Activated CD4-positive, alpha-beta T cell treated with anti-CD3 and anti-CD28 coated beads for 36 hours (primary cell): ENCODE measurements at regions of chr15 and their contacts with region 1.

Region 1: GRCh38 chr15:82985688-82986441 is at the start of gene RAMAC:
- DNase-seq: peak; percentile 96
- ATAC-seq: peak; percentile 94
- H3K4me3 Mint-ChIP-seq: peak within 1 kb of the TSS; percentile 98
- H3K27ac Mint-ChIP-seq: peak within 1 kb of the TSS; percentile 98
- H3K4me1 Mint-ChIP-seq: peaks cover 21% of the 10 kb centered on the region
- H3K27me3 Mint-ChIP-seq: no peaks in the 10 kb centered on the region
- total RNA-seq, gene RAMAC: 17.3 to 19.5 TPM

Region 2: GRCh38 chr15:82540055-82540983 is 445.5 kb before region 1 on chr15 and contains the start of gene RPS17:
- CTCF ChIA-PET with region 1: no interaction called
- POLR2A ChIA-PET with region 1: no interaction called
- intact Hi-C with region 1: loop called (anchors 1 to 5 kb)
- DNase-seq: peak; percentile 99
- ATAC-seq: peak; percentile 93
- H3K4me3 Mint-ChIP-seq: peak within 1 kb of the TSS; percentile 96
- H3K27ac Mint-ChIP-seq: peak within 1 kb of the TSS; percentile 96
- H3K4me1 Mint-ChIP-seq: peaks cover 23% of the 10 kb centered on the region
- H3K27me3 Mint-ChIP-seq: no peaks in the 10 kb centered on the region
- total RNA-seq, gene RPS17: 2,882 to 3,294 TPM

Region 3: GRCh38 chr15:82551666-82552247 is 434.1 kb before region 1 on chr15:
- CTCF ChIA-PET with region 1: no interaction called
- POLR2A ChIA-PET with region 1: no interaction called
- intact Hi-C with region 1: no loop called
- DNase-seq: no peak
- ATAC-seq: no peak
- H3K4me3 Mint-ChIP-seq: no peak overlapping the region
- H3K27ac Mint-ChIP-seq: no peak overlapping the region
- H3K4me1 Mint-ChIP-seq: no peaks in the 10 kb centered on the region
- H3K27me3 Mint-ChIP-seq: peaks cover 2% of the 10 kb centered on the region

Region 4: GRCh38 chr15:82709421-82710207 is 276.3 kb before region 1 on chr15 and contains the start of gene AP3B2:
- CTCF ChIA-PET with region 1: no interaction called
- POLR2A ChIA-PET with region 1: no interaction called
- intact Hi-C with region 1: loop called in 1 of 2 experiments (anchors 1 kb)
- DNase-seq: peak; percentile 85
- ATAC-seq: peak; percentile 97
- H3K4me3 Mint-ChIP-seq: peak within 1 kb of the TSS; percentile 52
- H3K27ac Mint-ChIP-seq: no peak within 1 kb of the TSS
- H3K4me1 Mint-ChIP-seq: no peaks in the 10 kb centered on the region
- H3K27me3 Mint-ChIP-seq: peaks cover 15% of the 10 kb centered on the region
- total RNA-seq, gene AP3B2: 0.39 to 0.59 TPM

Region 5: DNA sequence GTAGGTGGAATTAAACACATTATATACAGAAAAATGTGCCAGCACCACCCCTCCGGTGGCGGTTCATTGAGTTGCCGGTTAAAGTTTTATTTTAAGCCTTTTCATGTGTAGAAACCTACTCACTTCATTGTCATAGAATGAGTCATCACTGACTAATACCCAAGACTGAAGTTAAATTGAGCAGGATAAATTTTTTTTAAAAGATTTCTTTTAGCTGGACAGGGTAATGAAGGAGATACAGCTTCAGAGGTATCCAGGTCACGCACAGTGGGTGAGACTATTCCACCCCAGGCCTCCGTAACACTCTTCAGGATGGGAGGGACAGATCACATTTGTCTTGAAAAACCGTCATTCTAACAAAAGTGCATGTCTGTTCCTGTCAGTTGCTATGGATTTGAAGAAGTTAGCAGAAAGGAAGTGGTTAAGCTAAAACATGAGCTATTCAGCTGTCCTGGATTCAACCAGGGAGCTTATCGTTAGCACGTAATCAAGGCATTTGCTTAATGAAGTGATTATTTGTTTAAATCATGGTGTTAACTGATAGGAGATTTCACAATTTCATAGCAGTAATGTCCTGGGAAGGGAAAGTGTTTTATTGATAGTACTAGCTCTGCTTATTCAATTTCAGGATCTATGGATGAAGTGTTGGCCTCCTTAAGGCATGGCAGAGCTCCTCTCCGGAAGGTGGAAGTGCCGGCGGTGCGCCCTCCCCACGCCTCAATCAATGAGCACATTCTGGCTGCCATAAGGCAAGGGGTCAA is 153.1 kb before region 1 on chr15:
- CTCF ChIA-PET with region 1: interaction called, 3 read pairs
- POLR2A ChIA-PET with region 1: no interaction called
- intact Hi-C with region 1: loop called in 1 of 2 experiments (anchors 5 kb)
- DNase-seq: peak; percentile 72
- ATAC-seq: peak; percentile 92
- H3K4me3 Mint-ChIP-seq: no peak overlapping the region
- H3K27ac Mint-ChIP-seq: peak overlapping the region; percentile 7
- H3K4me1 Mint-ChIP-seq: peaks cover 34% of the 10 kb centered on the region
- H3K27me3 Mint-ChIP-seq: no peaks in the 10 kb centered on the region

Region 6: GRCh38 chr15:82952158-82953081 is 33.4 kb before region 1 on chr15 and contains the start of gene HOMER2:
- CTCF ChIA-PET with region 1: no interaction called
- POLR2A ChIA-PET with region 1: interaction called, 4 read pairs
- intact Hi-C with region 1: loop called in 1 of 2 experiments (anchors 1 kb)
- DNase-seq: peak; percentile 35
- ATAC-seq: peak; percentile 57
- H3K4me3 Mint-ChIP-seq: peak within 1 kb of the TSS; percentile 67
- H3K27ac Mint-ChIP-seq: peak within 1 kb of the TSS; percentile 65
- H3K4me1 Mint-ChIP-seq: peaks cover 2% of the 10 kb centered on the region
- H3K27me3 Mint-ChIP-seq: peaks cover 9% of the 10 kb centered on the region
- total RNA-seq, gene HOMER2: 3.5 to 4.6 TPM

Region 7: GRCh38 chr15:83066734-83067637 is 81.1 kb after region 1 on chr15 and contains the start of gene BTBD1:
- CTCF ChIA-PET with region 1: interaction called, 3 read pairs
- POLR2A ChIA-PET with region 1: interaction called, 12 read pairs
- intact Hi-C with region 1: loop called in 1 of 2 experiments (anchors 1 kb)
- DNase-seq: peak; percentile 96
- ATAC-seq: peak; percentile 98
- H3K4me3 Mint-ChIP-seq: peak within 1 kb of the TSS; percentile 79
- H3K27ac Mint-ChIP-seq: peak within 1 kb of the TSS; percentile 86
- H3K4me1 Mint-ChIP-seq: peaks cover 20% of the 10 kb centered on the region
- H3K27me3 Mint-ChIP-seq: no peaks in the 10 kb centered on the region
- total RNA-seq, gene BTBD1: 58.3 to 77.6 TPM